ENCODE measurements at regions of chr9 and their contacts with region 1.

Region 1: GRCh38 chr9:133054966-133055365 is 6.8 kb upstream of the CEL start:
- DNase-seq: peak in 4 of 10 donors; percentile 43 to 89 (median 72)

Region 2: DNA sequence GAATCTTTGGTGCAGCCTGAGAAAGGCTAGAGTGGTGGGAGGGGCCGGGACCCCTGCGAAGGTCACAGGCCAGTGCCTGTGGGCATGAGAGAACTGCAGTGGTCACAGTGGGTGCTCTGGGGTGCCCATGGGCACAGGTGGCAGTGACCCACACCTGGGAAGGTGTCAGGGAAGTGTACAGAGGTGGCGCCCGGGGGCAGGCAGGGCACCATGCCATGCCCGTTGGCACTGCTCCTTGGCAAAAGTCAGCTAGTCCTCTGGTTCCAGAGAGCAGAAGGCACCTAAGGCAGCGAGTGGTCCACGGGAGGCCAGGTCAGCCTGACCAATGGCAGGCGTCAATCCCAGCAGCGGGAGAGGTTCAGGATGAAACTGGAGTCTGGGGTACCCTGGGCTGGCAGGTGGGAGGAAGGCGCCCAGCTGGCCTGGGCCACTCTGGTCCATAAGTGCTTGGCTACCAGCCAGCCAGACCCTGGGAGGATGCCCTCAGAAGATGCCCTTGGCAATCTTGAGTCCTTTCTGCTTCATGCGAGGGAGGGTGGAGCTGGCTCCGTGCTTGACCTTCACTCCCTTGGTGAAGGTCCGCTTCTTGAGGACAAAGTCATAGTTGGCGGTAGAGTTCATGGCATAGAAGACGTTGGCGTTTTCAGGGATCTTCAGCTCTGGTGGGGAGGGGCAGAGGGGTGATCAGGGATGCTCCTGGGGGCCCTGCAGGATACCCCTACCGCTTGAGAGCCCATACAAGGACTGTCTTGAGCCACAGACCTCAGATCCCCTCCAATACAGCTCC is 43.3 kb after region 1 on chr9:
- intact Hi-C with region 1: loop called (anchors 5 kb)
- DNase-seq: peak in 3 of 10 donors; percentile 25 to 72 (median 69)

Region 3: GRCh38 chr9:133121198-133121939 is 66.4 kb after region 1 on chr9 and contains the start of gene RALGDS:
- intact Hi-C with region 1: no loop called
- DNase-seq: peak; percentile 83 to 99 (median 90)

Measured in posterior cingulate gyrus (tissue), 11 donors.